ENCODE measurements at regions of chr17 and their contacts with region 1.

Region 1: DNA sequence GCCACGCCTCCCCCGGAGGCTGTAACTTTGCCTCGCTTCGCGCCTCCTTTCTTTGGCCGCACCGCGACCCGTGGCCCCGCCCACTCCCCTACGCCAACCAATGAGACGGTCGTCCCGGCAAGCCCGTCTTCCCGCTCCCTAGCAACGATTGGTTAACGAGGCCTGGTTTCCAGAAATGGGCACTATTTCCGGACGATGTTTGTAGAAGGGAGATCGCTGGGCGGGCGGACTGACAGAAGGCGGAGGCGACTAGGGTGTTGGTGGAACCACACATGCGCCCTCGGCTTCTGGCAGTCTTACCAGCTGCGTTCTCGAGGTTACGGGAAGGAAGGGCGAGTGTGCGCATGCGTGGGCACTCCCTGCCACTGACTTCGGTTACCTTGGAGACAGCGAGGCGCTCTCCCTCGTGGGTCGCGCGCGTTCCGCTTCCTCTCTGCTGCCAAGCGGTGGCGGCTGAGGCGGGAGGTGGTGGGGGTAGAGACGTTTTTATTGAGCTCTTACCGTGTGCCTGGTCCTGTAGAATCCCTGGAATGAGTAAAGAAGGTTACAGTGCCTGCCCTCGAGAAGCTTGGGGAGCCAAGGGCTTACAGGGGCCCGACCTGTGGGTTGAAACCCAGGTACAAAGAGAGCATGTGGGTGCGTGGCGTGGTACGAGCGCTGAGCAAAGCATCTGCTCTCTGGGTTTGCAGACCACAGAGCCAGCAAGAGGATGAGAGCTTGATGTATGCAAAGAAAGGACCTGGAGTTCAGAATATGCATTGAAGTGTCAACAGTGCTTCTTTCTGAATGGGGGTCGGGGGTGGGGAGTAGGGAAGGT is 500 bp upstream of the MAP3K14 start:
- DNase-seq: peak; percentile 100
- ATAC-seq: peak; percentile 84
- H3K4me3 Mint-ChIP-seq: peak overlapping the region; percentile 81
- H3K27ac Mint-ChIP-seq: peak overlapping the region; percentile 85
- H3K4me1 Mint-ChIP-seq: peaks cover 66% of the 10 kb centered on the region
- H3K27me3 Mint-ChIP-seq: no peaks in the 10 kb centered on the region

Region 2: DNA sequence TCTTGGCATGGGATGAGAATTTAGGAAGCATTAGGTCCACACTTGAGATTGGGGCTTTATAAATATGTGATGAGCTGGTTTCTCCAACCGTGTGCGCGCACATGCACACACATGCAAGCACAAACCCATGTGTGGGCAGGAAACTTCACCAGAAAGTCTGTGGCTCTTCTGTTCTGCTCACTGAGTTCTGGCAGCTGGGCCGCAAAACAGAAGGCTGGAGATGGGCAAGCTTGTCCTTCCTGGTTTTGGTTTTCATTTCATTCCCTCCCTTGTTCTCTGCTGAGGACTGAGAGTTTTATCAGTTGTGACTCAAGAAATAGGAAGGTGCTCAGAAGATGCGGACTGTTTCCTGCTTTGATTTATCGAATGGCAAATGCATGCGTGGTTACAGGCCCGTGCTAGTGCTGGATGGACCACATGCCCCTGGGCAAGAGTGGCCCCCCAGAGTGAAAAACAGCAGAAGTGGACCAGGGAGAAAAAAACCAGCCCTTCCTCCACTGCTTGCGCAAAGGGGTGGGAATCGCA is 14.6 kb before region 1 on chr17:
- CTCF ChIA-PET with region 1: interaction called, 28 read pairs
- DNase-seq: peak; percentile 80
- ATAC-seq: peak; percentile 68
- H3K4me3 Mint-ChIP-seq: peak overlapping the region; percentile 55
- H3K27ac Mint-ChIP-seq: peak overlapping the region; percentile 90
- H3K4me1 Mint-ChIP-seq: peaks cover 84% of the 10 kb centered on the region
- H3K27me3 Mint-ChIP-seq: no peaks in the 10 kb centered on the region

Region 3: DNA sequence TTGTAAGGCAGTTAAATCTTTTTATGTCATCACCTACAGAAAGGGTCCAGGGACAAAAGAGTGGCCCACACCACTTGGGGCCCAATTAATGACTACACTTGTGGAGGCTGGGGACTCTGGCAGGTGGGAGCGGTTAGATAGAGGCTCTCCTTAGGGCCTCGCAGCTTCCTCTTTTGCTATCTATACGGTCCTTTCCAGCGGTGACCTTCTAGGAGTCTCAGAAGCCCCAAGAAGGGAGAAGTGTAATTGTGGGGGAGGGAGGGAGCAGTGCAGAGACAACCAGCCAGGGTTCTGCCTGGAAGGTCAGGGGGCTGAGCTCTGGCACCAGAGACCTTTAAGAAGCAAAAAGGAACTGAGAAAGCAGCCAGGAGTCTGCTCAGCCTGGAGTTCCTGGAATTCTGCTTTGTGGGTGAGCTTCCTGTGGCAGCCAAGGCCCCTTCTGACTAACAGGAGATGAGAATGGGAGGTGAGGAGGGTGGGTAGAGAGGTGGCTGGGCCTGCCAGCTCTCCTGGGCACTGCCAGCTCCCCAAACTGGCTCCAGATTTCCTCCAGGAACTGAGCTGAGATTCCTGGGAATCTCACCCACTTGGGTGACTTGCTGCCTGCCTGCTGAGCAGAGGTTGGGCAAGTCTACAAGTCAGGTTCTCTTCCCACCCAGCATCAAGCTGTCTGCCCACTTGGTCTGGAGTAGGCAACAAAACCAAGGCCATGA is 15.8 kb after region 1 on chr17:
- CTCF ChIA-PET with region 1: interaction called, 12 read pairs
- DNase-seq: no peak
- ATAC-seq: peak; percentile 16
- H3K4me3 Mint-ChIP-seq: no peak overlapping the region
- H3K27ac Mint-ChIP-seq: peak overlapping the region; percentile 68
- H3K4me1 Mint-ChIP-seq: peaks cover 40% of the 10 kb centered on the region
- H3K27me3 Mint-ChIP-seq: no peaks in the 10 kb centered on the region

Region 4: DNA sequence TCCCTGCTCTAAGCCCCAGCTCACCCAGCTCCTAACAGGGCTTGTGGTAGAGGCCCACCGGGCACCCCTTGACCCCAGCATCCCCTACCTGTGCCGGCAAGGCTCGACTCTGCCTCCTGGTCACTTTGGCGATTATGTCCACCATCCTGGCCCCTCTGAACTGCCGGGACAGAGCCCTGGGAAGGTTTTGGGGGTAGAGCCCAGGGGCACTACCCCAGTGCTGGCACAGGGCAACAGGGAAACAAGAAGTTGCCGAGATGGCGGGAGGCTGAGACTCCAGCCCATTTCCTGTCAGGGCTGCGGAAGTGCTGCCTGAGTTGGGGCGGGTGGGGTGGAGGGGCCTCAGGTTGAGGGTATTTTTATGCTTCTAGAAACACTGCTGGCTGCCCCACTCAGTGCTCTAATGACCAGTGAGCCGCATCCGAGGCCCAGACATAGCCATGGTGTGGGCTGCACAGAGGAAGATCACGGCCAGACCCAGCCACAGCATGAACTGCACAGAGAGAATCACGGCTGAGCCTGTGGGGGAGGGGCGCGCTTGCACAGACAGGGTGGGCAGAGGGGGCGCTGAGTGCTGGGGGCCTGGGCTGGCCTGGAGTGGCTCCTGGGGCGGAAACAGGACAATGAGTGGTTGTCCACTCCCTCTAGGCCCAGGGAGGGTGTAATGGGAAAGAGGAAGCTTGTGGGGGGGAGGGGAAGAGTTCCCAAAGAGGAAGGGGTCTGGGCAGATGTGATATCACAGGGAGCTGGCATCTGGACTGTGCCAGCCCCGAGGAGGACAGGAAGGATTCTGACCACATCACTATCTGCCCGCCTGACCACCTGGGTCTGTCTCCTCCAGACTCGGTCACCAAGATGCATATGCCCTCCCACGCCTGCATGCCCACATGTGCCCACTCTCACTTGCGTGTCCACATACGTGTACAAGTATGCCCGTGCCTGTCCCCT is 93.1 kb after region 1 on chr17:
- CTCF ChIA-PET with region 1: no interaction called
- DNase-seq: peak; percentile 79
- ATAC-seq: peak; percentile 84
- H3K4me3 Mint-ChIP-seq: peak overlapping the region; percentile 98
- H3K27ac Mint-ChIP-seq: peak overlapping the region; percentile 99
- H3K4me1 Mint-ChIP-seq: peaks cover 50% of the 10 kb centered on the region
- H3K27me3 Mint-ChIP-seq: no peaks in the 10 kb centered on the region

Measured in activated CD8-positive, alpha-beta memory T cell treated with anti-CD3 and anti-CD28 coated beads, Interleukin-2, amount 10 ng/mL, durations not matched to agents 7 days and 5 days (primary cell).